ENCODE measurements at regions of chr3 and their contacts with region 1.

Region 1: GRCh38 chr3:165854696-165855095 is 17.5 kb upstream of the BCHE start:
- DNase-seq: no peak
- H3K4me3 ChIP-seq: no peak overlapping the region
- H3K27ac ChIP-seq: no peak overlapping the region
- H3K27me3 ChIP-seq: no peaks in the 10 kb centered on the region
- CTCF ChIP-seq: peak; percentile 60

Region 2: GRCh38 chr3:165835431-165835830 is 19.3 kb before region 1 on chr3:
- CTCF ChIA-PET with region 1: interaction called, 20 read pairs
- POLR2A ChIA-PET with region 1: no interaction called
- DNase-seq: no peak
- H3K4me3 ChIP-seq: no peak overlapping the region
- H3K27ac ChIP-seq: no peak overlapping the region
- H3K27me3 ChIP-seq: no peaks in the 10 kb centered on the region
- CTCF ChIP-seq: no peak

Region 3: GRCh38 chr3:165868088-165868487 is 13.4 kb after region 1 on chr3:
- CTCF ChIA-PET with region 1: interaction called, 13 read pairs
- POLR2A ChIA-PET with region 1: no interaction called
- DNase-seq: no peak
- H3K4me3 ChIP-seq: no peak overlapping the region
- H3K27ac ChIP-seq: no peak overlapping the region
- H3K27me3 ChIP-seq: no peaks in the 10 kb centered on the region
- CTCF ChIP-seq: no peak

Region 4: DNA sequence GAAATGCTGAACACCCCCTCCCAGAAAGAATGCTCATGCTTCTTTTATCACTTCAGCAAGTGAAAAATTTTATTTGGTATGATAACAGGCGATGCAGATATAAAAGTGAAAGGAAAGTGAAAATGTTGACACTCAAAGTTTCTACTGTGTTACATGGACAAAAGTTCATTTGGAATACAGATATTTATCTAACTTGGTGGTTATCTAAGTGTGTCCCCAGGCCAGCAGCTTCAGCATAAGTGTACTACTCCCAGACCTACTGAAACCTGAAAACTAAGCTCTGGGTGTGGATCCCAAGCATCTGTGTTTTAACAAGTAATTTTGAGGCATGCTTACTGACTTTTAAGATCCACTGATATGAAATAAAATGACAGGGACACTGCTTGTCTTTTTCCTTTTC is 139.6 kb after region 1 on chr3:
- CTCF ChIA-PET with region 1: no interaction called
- POLR2A ChIA-PET with region 1: no interaction called
- DNase-seq: no peak
- H3K4me3 ChIP-seq: no peak overlapping the region
- H3K27ac ChIP-seq: no peak overlapping the region
- H3K27me3 ChIP-seq: no peaks in the 10 kb centered on the region
- CTCF ChIP-seq: no peak

Region 5: DNA sequence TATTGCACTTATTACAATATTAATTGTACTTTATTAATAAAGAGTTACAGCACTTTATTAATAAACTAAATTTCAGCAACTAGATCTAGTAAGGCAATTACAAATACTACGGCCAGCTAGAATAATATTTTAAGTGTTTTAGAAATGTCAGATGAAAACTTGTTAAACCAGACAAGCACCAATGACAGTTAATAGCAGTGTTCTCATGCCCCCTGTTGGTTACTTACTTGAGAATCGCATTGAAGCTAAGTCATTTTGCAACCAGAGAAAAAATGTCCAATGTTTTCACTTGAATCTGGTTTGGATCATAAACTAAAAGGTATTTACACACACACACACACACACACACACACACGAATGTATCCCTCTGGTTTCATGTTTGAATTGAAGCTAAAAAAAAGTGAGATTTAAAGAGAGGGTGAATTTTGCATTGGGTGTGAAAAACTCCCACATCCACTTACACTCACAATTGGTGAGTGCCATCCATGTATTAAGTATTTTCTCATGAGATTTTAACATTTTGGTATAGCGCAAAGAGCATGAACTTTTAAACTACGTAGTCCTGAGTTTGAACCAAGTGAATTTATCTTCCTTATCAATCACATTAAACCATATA is 1177.7 kb after region 1 on chr3:
- CTCF ChIA-PET with region 1: interaction called, 28 read pairs
- POLR2A ChIA-PET with region 1: no interaction called
- DNase-seq: peak; percentile 41
- H3K4me3 ChIP-seq: no peak overlapping the region
- H3K27ac ChIP-seq: no peak overlapping the region
- H3K27me3 ChIP-seq: no peaks in the 10 kb centered on the region
- CTCF ChIP-seq: peak; percentile 67

Measured in AG04450 (cell line).